Endothelial cell of umbilical vein (primary cell): ENCODE measurements at regions of chr12 and their contacts with region 1.

Region 1: DNA sequence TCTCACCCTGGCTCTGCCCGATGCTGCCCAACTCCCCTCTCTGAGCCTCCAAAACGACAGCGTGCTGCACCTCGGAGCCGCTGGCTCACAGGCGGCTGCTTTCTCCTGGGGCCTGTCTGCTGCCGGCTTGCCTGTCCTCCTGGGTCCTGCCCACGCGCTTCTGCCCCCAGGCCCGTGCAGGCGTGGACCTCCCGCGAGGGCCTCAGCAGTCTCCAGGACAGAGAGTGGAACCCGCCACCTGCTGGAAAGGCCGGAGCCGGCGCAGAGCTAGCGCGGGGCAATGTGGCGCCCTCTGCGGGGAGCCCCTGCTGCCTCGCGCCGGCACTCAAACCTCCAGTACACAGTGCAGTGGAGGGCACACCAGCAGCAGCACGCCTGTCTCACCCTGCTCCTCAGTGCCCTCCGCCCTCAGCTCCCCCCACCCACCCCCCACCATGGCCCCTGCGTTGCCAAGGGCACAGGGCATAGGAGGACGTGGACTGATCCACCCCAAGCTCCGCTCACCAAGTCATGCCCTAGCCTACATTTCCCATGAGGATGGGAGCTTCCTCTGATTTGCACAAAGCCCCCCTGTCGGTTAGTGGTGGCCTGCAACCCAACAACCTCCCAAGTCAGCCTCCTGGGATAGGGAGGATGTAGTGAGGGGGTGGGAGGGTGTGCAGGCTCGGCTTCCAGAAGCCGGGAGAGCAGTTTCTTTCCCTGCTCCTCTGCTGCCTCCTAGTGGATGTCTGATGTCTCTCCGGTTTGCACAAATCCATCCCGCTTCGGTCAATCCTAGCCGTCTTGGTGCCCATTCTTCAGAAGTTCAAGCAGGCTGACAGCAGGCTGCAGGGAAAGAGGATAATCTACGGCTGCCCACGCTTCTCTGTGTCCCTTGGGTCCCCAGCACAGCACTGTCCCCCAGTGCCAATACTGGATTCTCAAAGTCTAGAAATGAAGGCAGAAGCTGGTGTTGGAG is 25.2 kb downstream of the KRT8 start:
- DNase-seq: peak; percentile 83
- H3K4me3 ChIP-seq: peak overlapping the region in 1 of 3 experiments; percentile 23
- H3K27ac ChIP-seq: no peak overlapping the region
- H3K4me1 ChIP-seq: peaks cover 2% of the 10 kb centered on the region
- H3K27me3 ChIP-seq: no peaks in the 10 kb centered on the region
- CTCF ChIP-seq: peak; percentile 77 to 99
- POLR2A ChIP-seq: no peak

Region 2: DNA sequence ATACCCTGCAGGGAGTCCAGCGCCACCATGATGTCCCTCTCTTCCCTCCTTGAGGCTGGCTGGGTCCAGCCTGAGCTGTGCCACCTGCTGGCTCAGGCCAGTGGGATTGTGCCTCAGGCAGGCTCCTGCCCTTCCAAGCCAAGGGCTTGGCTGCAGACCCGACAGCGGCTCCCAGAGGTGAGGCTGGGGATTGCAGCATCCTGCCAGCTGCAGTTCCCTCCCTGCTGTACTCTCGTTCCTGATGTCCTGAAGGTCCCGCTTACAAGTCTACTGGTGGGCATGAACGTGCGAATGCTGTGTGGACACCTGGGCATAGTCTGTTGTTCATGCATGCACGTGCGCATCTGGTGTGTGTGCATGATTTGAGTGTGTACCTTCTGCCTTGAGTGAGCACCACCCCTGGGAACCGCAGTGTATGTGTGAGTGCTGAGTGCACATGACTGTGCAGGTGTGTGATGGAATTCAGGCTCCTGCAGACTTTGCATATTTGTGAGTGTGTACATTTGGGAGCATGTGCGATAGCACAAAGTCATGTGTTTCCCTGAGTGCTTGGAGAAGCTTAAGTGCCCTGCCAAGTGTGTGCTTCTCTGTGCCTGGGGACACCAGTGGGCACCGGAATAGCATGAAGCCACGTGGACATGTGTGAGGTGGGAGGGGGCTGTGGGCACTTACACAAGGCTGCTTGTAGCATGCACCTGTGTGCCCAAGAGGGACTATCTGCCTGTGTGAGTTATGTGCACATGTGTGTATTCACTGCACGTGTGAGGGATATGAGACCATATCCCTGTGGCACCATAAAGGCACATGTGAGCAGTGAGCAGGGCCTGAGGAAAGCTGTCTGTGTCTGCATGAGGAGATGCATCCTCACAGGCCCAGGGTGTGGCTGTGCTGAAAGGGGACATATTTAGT is 665.9 kb before region 1 on chr12:
- CTCF ChIA-PET with region 1: no interaction called
- POLR2A ChIA-PET with region 1: no interaction called
- dilution Hi-C with region 1: no loop called
- intact Hi-C with region 1: loop called (anchors 10 kb)
- DNase-seq: peak; percentile 90
- H3K4me3 ChIP-seq: no peak overlapping the region
- H3K27ac ChIP-seq: no peak overlapping the region
- H3K4me1 ChIP-seq: peaks cover 33% of the 10 kb centered on the region
- H3K27me3 ChIP-seq: no peaks in the 10 kb centered on the region
- CTCF ChIP-seq: peak; percentile 100
- POLR2A ChIP-seq: no peak

Region 3: DNA sequence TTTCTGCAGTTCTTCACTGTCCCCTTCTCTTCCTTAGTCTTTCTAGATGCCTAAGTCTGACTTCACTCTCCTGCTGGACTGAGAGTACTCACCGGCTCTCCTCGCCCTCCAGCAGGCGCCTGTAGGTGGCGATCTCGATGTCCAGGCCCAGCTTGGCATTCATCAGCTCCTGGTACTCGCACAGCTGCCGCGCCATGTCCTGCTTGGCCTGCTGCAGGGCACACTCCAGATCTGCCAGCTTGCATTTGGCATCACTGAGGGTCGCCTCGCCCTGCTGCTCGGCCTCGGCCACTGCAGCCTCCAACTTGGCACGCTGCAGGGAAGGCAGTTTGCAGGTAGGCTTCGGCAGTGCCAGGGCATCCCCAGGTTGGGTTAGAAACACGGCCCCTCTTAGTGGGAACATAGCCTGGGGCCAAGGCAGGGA is 499.4 kb before region 1 on chr12:
- CTCF ChIA-PET with region 1: interaction called, 28 read pairs
- POLR2A ChIA-PET with region 1: no interaction called
- dilution Hi-C with region 1: no loop called
- intact Hi-C with region 1: no loop called
- DNase-seq: peak; percentile 20
- H3K4me3 ChIP-seq: no peak overlapping the region
- H3K27ac ChIP-seq: no peak overlapping the region
- H3K4me1 ChIP-seq: no peaks in the 10 kb centered on the region
- H3K27me3 ChIP-seq: peaks cover 2 to 14% of the 10 kb centered on the region in 2 experiments
- CTCF ChIP-seq: peak; percentile 51 to 68
- POLR2A ChIP-seq: no peak

Region 4: GRCh38 chr12:52582971-52583456 is 296.7 kb before region 1 on chr12:
- CTCF ChIA-PET with region 1: interaction called, 135 read pairs
- POLR2A ChIA-PET with region 1: no interaction called
- dilution Hi-C with region 1: no loop called
- intact Hi-C with region 1: loop called (anchors 1 kb)
- DNase-seq: peak; percentile 53
- H3K4me3 ChIP-seq: no peak overlapping the region
- H3K27ac ChIP-seq: no peak overlapping the region
- H3K4me1 ChIP-seq: no peaks in the 10 kb centered on the region
- H3K27me3 ChIP-seq: peaks cover 2% of the 10 kb centered on the region in 2 experiments
- CTCF ChIP-seq: peak; percentile 49 to 66
- POLR2A ChIP-seq: no peak

Region 5: GRCh38 chr12:52634266-52635056 is 245.2 kb before region 1 on chr12:
- CTCF ChIA-PET with region 1: no interaction called
- POLR2A ChIA-PET with region 1: no interaction called
- dilution Hi-C with region 1: no loop called
- intact Hi-C with region 1: no loop called
- DNase-seq: no peak
- H3K4me3 ChIP-seq: no peak overlapping the region
- H3K27ac ChIP-seq: no peak overlapping the region
- H3K4me1 ChIP-seq: no peaks in the 10 kb centered on the region
- H3K27me3 ChIP-seq: peaks cover 12 to 14% of the 10 kb centered on the region in 2 experiments
- CTCF ChIP-seq: no peak
- POLR2A ChIP-seq: no peak

Region 6: GRCh38 chr12:52735816-52736632 is 143.6 kb before region 1 on chr12:
- CTCF ChIA-PET with region 1: no interaction called
- POLR2A ChIA-PET with region 1: no interaction called
- dilution Hi-C with region 1: no loop called
- intact Hi-C with region 1: no loop called
- DNase-seq: no peak
- H3K4me3 ChIP-seq: no peak overlapping the region
- H3K27ac ChIP-seq: no peak overlapping the region
- H3K4me1 ChIP-seq: no peaks in the 10 kb centered on the region
- H3K27me3 ChIP-seq: no peaks in the 10 kb centered on the region
- CTCF ChIP-seq: no peak
- POLR2A ChIP-seq: no peak

Region 7: DNA sequence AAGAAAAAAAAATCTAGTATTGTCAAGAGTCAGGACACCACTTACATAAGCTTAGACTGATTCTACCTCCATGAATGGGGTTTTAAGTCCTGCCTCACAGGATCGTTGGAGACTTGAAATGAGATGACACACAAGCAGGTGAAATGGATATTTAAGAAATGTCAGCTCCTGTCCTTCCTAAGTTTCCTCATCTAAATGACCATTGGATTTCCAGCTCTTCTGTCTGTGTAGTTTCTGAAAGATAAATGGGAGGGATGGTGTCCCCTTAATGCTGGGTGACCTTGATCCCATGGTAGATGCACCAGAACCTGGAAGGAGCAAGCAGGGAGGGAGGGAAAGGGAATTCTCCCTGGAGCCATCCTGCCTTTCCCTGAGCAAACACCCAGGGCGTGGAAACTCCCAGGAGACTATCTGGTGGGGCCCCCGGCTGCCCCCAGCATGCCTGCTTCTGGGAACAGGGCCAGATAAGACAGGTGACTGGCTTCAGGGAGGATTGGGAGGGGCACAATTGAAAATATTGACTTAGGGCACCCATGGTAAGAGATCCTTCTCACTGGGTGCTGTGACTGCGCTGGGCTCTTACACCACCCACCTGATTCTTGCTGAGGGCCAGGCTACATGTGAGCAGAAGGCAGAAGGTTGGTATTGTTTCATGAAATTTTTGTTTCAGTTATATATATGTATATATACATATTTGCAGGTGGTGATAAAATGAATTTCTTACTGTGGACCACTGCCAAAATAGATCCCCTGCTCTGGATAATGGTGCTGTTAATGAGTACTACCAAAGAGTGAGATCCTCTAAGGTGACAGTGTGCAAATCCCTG is 15.6 kb after region 1 on chr12:
- CTCF ChIA-PET with region 1: interaction called, 72 read pairs
- POLR2A ChIA-PET with region 1: no interaction called
- dilution Hi-C with region 1: no loop called
- intact Hi-C with region 1: no loop called
- DNase-seq: no peak
- H3K4me3 ChIP-seq: no peak overlapping the region
- H3K27ac ChIP-seq: no peak overlapping the region
- H3K4me1 ChIP-seq: no peaks in the 10 kb centered on the region
- H3K27me3 ChIP-seq: no peaks in the 10 kb centered on the region
- CTCF ChIP-seq: no peak
- POLR2A ChIP-seq: no peak